Activated CD8-positive, alpha-beta memory T cell treated with anti-CD3 and anti-CD28 coated beads, Interleukin-2, amount 10 ng/mL, durations not matched to agents 7 days and 5 days (primary cell): ENCODE measurements at regions of chr3 and their contacts with region 1.

Region 1: GRCh38 chr3:30628901-30629590 is 22.6 kb downstream of the TGFBR2 start:
- DNase-seq: no peak
- ATAC-seq: peak; percentile 46
- H3K4me3 Mint-ChIP-seq: peak overlapping the region; percentile 34
- H3K27ac Mint-ChIP-seq: peak overlapping the region; percentile 89
- H3K4me1 Mint-ChIP-seq: peaks cover 91% of the 10 kb centered on the region
- H3K27me3 Mint-ChIP-seq: no peaks in the 10 kb centered on the region

Region 2: DNA sequence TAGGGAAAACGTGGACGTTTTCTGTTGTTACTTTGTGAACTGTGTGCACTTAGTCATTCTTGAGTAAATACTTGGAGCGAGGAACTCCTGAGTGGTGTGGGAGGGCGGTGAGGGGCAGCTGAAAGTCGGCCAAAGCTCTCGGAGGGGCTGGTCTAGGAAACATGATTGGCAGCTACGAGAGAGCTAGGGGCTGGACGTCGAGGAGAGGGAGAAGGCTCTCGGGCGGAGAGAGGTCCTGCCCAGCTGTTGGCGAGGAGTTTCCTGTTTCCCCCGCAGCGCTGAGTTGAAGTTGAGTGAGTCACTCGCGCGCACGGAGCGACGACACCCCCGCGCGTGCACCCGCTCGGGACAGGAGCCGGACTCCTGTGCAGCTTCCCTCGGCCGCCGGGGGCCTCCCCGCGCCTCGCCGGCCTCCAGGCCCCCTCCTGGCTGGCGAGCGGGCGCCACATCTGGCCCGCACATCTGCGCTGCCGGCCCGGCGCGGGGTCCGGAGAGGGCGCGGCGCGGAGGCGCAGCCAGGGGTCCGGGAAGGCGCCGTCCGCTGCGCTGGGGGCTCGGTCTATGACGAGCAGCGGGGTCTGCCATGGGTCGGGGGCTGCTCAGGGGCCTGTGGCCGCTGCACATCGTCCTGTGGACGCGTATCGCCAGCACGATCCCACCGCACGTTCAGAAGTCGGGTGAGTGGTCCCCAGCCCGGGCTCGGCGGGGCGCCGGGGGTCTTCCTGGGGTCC is 22.6 kb before region 1 on chr3 and contains the start of gene TGFBR2:
- CTCF ChIA-PET with region 1: interaction called, 18 read pairs
- DNase-seq: peak; percentile 95
- ATAC-seq: peak; percentile 83
- H3K4me3 Mint-ChIP-seq: peak within 1 kb of the TSS; percentile 91
- H3K27ac Mint-ChIP-seq: peak within 1 kb of the TSS; percentile 99
- H3K4me1 Mint-ChIP-seq: peaks cover 53% of the 10 kb centered on the region
- H3K27me3 Mint-ChIP-seq: no peaks in the 10 kb centered on the region
- total RNA-seq, gene TGFBR2: 47.3 to 50.5 TPM

Region 3: DNA sequence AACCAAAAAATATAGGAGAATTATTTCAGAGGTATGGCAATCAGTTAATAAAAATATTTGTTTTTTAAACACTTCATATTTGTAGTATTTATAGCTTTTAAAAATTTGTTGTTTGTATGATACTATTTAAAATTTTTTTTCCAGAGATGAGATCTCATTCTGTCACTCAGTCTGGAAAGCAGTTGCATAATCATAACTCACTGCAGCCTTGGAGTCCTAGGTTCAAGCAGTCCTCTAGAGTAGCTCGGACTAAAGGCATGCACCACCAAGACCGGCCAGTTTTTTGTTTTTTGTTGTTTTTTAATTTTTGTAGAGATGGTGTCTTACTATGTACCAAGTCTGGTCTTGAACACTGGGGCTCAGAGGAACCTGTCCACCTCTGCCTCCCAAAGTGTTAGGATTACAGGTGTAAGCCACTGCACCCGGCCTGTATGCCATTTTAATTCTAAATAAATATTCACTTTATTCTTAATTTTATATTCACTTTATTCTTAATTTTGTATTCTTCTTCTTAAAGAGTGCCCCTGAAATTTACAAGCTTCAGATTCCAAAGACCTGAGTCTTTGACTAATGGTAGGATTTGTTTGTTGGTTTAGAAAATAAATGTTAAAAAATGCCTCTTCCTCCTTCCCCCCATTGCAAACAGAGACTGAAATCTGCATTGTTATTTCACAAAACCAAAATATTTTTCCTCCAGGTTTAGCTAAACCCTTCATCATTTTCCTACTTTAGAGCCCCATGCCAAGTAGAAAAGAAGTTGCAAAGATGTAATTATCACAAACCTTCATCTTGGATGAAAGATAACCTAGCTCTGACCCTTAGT is 13.2 kb before region 1 on chr3:
- CTCF ChIA-PET with region 1: interaction called, 13 read pairs
- DNase-seq: no peak
- ATAC-seq: no peak
- H3K4me3 Mint-ChIP-seq: peak overlapping the region; percentile 26
- H3K27ac Mint-ChIP-seq: peak overlapping the region; percentile 83
- H3K4me1 Mint-ChIP-seq: peaks cover 93% of the 10 kb centered on the region
- H3K27me3 Mint-ChIP-seq: no peaks in the 10 kb centered on the region

Region 4: GRCh38 chr3:30644593-30645012 is 15.6 kb after region 1 on chr3:
- CTCF ChIA-PET with region 1: interaction called, 13 read pairs
- DNase-seq: peak; percentile 82
- ATAC-seq: peak; percentile 49
- H3K4me3 Mint-ChIP-seq: peak overlapping the region; percentile 62
- H3K27ac Mint-ChIP-seq: peak overlapping the region; percentile 96
- H3K4me1 Mint-ChIP-seq: peaks cover 90% of the 10 kb centered on the region
- H3K27me3 Mint-ChIP-seq: no peaks in the 10 kb centered on the region

Region 5: DNA sequence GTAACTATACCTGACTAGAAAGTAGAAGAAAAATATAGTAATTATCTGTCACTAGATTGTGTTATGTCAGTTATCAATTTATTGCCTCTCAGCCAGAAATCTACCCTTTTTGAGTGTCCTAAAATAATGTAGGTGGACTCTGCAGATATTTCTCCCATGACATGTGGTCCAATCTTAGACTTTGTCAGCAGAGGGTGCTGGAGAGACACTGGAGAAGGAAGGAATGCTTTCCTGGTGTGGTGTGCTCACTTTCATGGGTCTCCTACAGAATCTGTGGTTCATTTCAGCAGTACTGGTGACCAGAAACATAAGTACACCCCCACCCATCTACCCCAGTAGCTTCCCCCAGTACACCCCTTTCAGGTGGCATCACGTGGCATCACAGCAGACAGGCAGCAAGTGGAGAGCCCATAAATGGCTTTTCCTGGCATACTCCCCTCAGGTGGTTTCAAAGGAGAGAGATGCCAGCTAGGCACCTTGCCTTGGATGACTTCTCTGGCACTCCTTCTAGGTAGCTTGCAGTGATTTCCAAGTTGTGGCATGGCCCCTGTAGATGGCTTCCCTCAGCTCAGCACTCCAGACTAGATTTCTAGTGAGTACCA is 150.7 kb after region 1 on chr3:
- CTCF ChIA-PET with region 1: no interaction called
- DNase-seq: no peak
- ATAC-seq: no peak
- H3K4me3 Mint-ChIP-seq: no peak overlapping the region
- H3K27ac Mint-ChIP-seq: no peak overlapping the region
- H3K4me1 Mint-ChIP-seq: no peaks in the 10 kb centered on the region
- H3K27me3 Mint-ChIP-seq: peaks cover 23% of the 10 kb centered on the region